T-cell (primary cell): ENCODE measurements at regions of chr2 and their contacts with region 1.

Region 1: GRCh38 chr2:9174771-9175437 is 31.7 kb upstream of the ASAP2 start:
- DNase-seq: no peak
- ATAC-seq: no peak
- H3K4me3 ChIP-seq: no peak overlapping the region
- H3K4me3 Mint-ChIP-seq: no peak overlapping the region
- H3K27ac ChIP-seq: no peak overlapping the region
- H3K27ac Mint-ChIP-seq: no peak overlapping the region
- H3K4me1 ChIP-seq: no peaks in the 10 kb centered on the region
- H3K4me1 Mint-ChIP-seq: no peaks in the 10 kb centered on the region
- H3K27me3 ChIP-seq: peaks cover 0 to 18% of the 10 kb centered on the region in 2 experiments
- H3K27me3 Mint-ChIP-seq: peaks cover 17 to 21% of the 10 kb centered on the region in 2 donors

Region 2: GRCh38 chr2:8885449-8886201 is 289.3 kb before region 1 on chr2:
- CTCF ChIA-PET with region 1: no interaction called
- POLR2A ChIA-PET with region 1: no interaction called
- DNase-seq: no peak
- ATAC-seq: no peak
- H3K4me3 ChIP-seq: no peak overlapping the region
- H3K4me3 Mint-ChIP-seq: no peak overlapping the region
- H3K27ac ChIP-seq: no peak overlapping the region
- H3K27ac Mint-ChIP-seq: no peak overlapping the region
- H3K4me1 ChIP-seq: no peaks in the 10 kb centered on the region
- H3K4me1 Mint-ChIP-seq: no peaks in the 10 kb centered on the region
- H3K27me3 ChIP-seq: no peaks in the 10 kb centered on the region
- H3K27me3 Mint-ChIP-seq: peaks cover 0 to 4% of the 10 kb centered on the region in 2 donors

Region 3: GRCh38 chr2:9142551-9143263 is 32.2 kb before region 1 on chr2:
- CTCF ChIA-PET with region 1: interaction called in 1 of 2 experiments, 11 read pairs
- POLR2A ChIA-PET with region 1: no interaction called
- DNase-seq: peak; percentile 22 to 80 (median 63)
- ATAC-seq: peak; percentile 83 to 92 (median 89)
- H3K4me3 ChIP-seq: peak overlapping the region in 1 of 2 donors; percentile 46
- H3K4me3 Mint-ChIP-seq: peak overlapping the region in 1 of 3 donors; percentile 17
- H3K27ac ChIP-seq: no peak overlapping the region
- H3K27ac Mint-ChIP-seq: no peak overlapping the region
- H3K4me1 ChIP-seq: peaks cover 0 to 9% of the 10 kb centered on the region in 2 experiments
- H3K4me1 Mint-ChIP-seq: peaks cover 0 to 3% (median 0%) of the 10 kb centered on the region in 3 donors
- H3K27me3 ChIP-seq: peaks cover 0 to 49% of the 10 kb centered on the region in 2 experiments
- H3K27me3 Mint-ChIP-seq: peaks cover 25 to 26% of the 10 kb centered on the region in 2 donors